Heart left ventricle (tissue), 16 donors: ENCODE measurements at regions of chr6 and their contacts with region 1.

Region 1: DNA sequence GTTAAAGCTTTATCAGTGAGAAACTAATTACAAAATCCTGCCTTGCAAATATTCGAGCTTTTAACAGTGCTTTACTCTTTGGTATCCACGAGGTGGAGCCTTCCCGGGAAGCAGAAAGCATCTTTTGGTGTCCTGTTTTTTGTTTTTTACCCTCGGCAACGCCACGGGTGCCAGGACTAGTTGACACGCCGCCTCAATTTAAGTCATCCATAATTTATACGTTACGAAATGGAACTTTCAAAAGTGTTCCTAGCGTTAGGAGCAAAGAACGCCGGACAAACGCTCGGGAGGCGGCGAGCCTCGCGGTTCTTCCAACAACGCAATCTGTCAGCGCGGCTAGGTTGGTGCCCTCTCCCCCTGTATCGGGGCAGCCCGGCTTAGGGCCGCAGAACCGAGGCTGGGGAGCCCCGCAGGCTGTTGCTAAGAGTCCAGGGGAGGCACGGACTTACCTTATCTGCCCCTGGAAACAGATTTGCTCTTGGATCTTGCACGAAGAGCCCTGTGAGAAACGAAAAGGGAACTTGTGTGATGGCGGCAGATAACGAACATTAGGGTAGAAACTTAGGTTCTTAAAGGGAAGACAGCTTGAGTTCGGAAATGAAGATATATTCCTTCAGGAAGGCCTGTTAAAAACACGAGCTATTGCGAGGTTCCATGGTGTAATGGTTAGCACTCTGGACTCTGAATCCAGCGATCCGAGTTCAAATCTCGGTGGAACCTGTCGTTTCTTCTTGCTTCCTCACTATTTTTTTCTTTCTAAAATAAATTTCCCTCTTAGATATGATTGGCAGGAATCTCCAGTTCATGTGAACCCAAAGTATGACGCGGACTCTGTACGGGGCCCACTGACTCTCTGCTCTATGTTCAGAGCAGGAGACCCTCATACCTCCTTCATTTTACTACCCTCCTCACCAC is 46.2 kb upstream of the ZNF184 start:
- DNase-seq: peak; percentile 50 to 71 (median 55)
- ATAC-seq: peak; percentile 90 to 95 (median 93)
- H3K4me3 ChIP-seq: peak overlapping the region; percentile 43 to 83 (median 70)
- H3K27ac ChIP-seq: peak overlapping the region; percentile 68 to 94 (median 80)
- H3K4me1 ChIP-seq: peaks cover 0 to 13% (median 7%) of the 10 kb centered on the region in 12 donors
- H3K27me3 ChIP-seq: peaks cover 0 to 23% (median 7%) of the 10 kb centered on the region in 9 donors
- CTCF ChIP-seq: peak; percentile 48 to 78 (median 66)
- POLR2A ChIP-seq: no peak

Region 2: DNA sequence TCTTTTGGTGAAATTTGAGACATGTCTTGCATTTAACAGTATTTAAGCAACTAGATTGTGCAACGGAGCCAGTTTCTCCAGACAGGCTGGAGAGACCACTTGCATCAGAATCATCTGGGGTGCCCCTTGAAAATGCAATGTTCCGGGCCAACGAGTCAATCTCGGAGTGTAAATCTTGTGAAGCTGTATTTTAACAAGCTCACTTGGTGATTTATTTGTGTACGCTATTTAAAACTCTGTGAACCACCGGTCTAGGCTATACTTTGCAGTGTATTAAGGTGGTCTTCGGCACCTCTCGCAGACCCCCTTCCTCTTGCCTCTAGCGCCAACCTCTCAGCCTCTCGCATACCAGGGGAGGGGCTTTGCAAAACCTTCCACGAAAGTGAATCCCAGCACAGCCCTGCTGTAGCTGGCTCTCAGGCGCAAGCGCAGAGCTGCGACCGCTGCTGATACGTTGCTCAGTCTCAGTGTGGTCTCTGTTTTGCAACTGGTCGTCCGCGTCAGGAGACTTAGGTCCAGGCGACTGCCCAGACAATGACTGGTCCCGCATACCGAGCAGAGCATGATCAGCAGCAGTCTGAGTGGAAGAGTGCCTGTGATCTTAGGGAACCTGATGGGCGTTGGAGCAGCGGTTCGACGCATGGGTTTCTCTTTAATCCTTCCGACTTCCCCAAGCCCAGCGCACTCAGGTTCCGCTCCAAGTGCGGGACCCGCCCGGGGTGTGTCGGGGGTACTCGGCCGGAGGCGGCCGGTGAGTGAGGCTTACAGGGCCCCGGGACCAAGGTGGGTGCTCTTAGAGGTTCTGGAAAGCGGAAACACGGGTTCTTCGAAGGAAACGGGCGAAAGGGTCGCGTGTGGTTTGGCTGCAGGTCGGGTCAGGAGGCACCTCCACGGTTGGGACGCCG is 130.6 kb before region 1 on chr6 and contains the start of gene ZNF391:
- intact Hi-C with region 1: no loop called
- DNase-seq: peak; percentile 54 to 83 (median 79)
- ATAC-seq: peak; percentile 83 to 97 (median 96)
- H3K4me3 ChIP-seq: peak within 1 kb of the TSS; percentile 7 to 94 (median 69)
- H3K27ac ChIP-seq: peak within 1 kb of the TSS in 11 of 12 donors; percentile 13 to 81 (median 67)
- H3K4me1 ChIP-seq: peaks cover 0 to 16% (median 7%) of the 10 kb centered on the region in 12 donors
- H3K27me3 ChIP-seq: peaks cover 0 to 3% (median 0%) of the 10 kb centered on the region in 9 donors
- CTCF ChIP-seq: no peak
- POLR2A ChIP-seq: peak in 1 of 2 donors; percentile 56
- total RNA-seq, gene ZNF391: 0.26 to 1.5 (median 0.69) TPM

Region 3: DNA sequence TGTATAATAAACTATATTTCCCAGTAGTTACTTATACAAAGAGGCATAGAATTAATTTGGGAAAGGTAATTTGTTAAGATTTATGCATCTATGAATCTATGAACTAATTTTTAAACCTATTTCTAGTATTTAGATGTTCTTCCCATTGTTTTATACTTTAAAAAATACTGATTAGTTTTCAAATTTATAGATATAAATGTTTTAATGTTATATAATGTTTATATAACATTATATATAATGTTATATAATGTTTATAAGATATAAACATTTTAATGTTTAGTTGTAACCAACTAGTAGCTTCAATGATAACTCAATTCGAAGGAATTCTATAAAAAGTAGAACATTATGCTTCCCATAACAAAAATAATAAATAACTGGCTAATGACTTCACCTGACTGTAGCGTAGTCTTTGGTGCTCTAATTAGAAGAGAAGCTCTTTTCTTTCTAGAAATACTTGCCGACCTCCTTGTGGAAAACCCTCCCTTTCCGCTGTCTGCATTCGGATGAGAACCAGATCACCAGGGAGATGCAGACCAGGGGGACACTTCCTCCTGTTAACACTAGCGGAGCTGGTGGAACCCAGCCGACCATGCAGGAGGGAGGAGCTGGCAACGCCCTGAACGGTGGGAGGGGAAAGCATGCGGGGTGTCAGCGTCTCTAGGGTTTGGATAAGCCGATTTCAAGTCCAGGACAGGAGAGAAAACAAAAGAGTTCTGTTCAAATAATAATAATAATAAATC is 234.7 kb after region 1 on chr6:
- intact Hi-C with region 1: loop called (anchors 1 to 10 kb)
- DNase-seq: peak; percentile 37 to 81 (median 56)
- ATAC-seq: peak in 2 of 4 donors; percentile 67 to 77
- H3K4me3 ChIP-seq: peak overlapping the region in 10 of 12 donors; percentile 61 to 88 (median 69)
- H3K27ac ChIP-seq: no peak overlapping the region
- H3K4me1 ChIP-seq: peaks cover 0 to 23% (median 7%) of the 10 kb centered on the region in 12 donors
- H3K27me3 ChIP-seq: peaks cover 5 to 30% (median 20%) of the 10 kb centered on the region in 9 donors
- CTCF ChIP-seq: peak in 1 of 12 donors; percentile 7
- POLR2A ChIP-seq: peak in 1 of 2 donors; percentile 7

Region 4: GRCh38 chr6:27861276-27861840 is 342.2 kb after region 1 on chr6:
- intact Hi-C with region 1: no loop called
- DNase-seq: no peak
- ATAC-seq: no peak
- H3K4me3 ChIP-seq: no peak overlapping the region
- H3K27ac ChIP-seq: no peak overlapping the region
- H3K4me1 ChIP-seq: peaks cover 0 to 23% (median 9%) of the 10 kb centered on the region in 12 donors
- H3K27me3 ChIP-seq: peaks cover 0 to 4% (median 0%) of the 10 kb centered on the region in 9 donors
- CTCF ChIP-seq: no peak
- POLR2A ChIP-seq: no peak

Region 5: DNA sequence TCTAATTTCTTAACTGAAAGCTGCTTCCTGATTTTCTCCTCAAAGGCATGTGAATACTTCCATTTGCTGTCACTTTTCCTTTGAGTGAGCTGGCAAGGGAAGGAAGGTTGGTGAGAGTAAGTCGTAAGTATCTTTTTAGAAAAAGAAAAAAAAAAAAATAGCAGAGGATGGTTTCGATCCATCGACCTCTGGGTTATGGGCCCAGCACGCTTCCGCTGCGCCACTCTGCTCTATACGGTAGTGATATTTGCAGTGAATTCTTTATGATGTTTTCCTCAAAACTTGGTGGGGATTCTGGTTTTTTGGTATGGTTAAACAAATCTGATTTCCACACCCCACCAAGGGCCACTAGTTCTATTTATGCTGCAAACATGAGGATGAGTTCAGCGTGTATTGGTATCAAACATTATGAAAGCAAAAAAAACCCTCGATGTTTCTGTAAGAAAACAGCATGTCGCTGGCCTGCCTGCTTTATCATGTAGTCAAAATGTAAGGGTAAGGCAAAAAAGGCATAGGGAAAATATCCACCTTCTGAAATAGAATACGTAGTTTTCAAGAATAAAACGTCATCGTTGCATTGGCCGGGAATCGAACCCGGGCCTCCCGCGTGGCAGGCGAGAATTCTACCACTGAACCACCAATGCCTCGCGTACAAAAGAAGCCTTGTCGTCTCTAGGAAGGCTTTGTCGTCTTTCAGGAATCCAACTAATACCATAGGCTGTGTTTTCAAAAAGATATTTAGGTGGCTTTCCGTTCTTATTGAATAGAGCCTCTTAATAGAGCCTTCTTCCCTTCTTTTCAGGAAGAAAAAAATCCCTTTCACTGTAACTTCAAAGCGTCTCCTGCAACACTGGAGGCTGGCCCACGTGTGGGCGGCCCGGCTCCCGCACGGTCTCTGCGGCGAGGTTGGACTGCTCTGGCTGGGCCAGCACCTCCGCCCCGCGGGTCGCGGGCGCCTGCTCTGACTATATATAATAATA is 383.5 kb after region 1 on chr6:
- intact Hi-C with region 1: loop called in 6 of 10 experiments (anchors 5 to 10 kb)
- DNase-seq: peak; percentile 73 to 86 (median 83)
- ATAC-seq: peak; percentile 90 to 96 (median 96)
- H3K4me3 ChIP-seq: peak overlapping the region; percentile 30 to 71 (median 60)
- H3K27ac ChIP-seq: peak overlapping the region in 11 of 12 donors; percentile 36 to 90 (median 76)
- H3K4me1 ChIP-seq: peaks cover 0 to 14% (median 2%) of the 10 kb centered on the region in 12 donors
- H3K27me3 ChIP-seq: no peaks in the 10 kb centered on the region
- CTCF ChIP-seq: no peak
- POLR2A ChIP-seq: no peak